PC-9 (cell line): ENCODE measurements at regions of chr16 and their contacts with region 1.

Region 1: DNA sequence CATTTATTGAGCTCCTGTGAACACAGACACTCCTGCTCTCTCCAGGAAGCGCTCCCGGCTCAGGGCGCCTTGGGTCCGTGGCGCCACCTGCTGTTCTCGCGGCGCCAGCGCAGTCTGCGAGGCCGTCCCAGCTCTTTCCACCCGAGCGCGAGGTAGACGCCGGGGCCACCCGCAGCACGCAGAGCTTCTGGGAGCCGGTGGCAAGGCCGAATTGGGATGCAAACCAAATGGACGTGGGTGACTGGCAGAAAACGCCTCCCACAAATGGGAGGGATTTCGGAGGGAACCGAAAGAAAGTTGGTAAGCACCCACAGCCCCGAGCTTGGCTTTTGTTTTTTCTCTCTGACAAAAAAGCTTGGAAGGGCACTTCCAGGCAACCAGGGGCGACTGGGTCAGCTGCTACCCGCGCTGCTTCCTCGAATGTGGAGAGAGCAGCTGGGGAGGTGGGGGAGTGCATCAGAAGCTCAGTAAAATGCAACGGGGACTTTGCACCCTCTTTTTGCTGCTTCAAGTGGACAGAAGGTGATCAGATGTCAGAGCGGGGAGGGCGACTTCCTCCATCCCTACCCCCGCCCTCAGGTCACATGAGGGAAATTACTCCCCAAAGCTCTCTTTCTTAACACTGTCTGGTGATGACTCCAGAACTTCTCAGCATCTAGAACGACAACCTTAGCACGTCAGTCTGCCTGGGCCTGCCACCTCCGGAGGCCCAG is 13.5 kb upstream of the N4BP1 start:
- DNase-seq: peak; percentile 64 to 92
- H3K4me3 ChIP-seq: peak overlapping the region; percentile 56
- H3K27ac ChIP-seq: no peak overlapping the region
- H3K4me1 ChIP-seq: 0 out of 2 replicates have a peak, but pooled peaks cover 8% of the 10 kb centered on the region
- H3K27me3 ChIP-seq: no peaks in the 10 kb centered on the region
- CTCF ChIP-seq: peak; percentile 95

Region 2: DNA sequence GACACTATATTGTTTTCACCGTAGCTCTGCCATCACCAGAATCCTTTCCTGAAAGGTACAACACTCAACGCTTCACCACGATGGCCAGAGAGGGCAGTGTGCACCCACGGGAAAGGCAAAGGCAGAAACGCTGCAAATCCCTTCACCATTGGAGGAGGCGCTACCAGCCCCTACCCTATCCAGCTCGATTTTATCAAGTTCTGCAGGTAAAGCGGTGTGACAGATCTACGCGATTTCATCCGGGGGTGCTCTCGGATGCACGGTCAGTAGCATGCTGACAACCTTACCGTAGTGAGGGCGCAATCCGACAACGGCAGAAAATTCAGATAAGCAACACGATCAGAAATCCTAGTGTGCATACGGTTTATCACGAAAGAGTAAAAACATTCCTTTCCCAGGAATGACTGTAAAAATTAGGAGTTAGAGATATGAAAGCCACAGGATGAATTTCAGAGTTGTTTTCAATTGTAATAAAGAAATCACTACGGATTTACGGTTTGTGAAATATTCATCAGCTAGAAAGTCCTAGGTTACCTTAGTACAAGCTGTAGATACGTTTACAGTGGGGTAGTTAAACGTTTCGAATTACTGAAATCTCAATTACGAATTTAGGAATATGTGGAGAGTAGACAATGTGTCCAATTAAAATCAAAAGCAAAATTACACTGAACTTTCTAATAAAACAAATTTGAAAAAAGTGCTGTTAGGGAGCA is 1481.5 kb before region 1 on chr16:
- CTCF ChIA-PET with region 1: interaction called, 3 read pairs
- POLR2A ChIA-PET with region 1: interaction called, 4 read pairs
- intact Hi-C with region 1: loop called (anchors 2 kb)
- DNase-seq: peak; percentile 83 to 86
- H3K4me3 ChIP-seq: peak overlapping the region; percentile 75
- H3K27ac ChIP-seq: peak overlapping the region; percentile 17; the same call in 1 of the 2 replicates
- H3K4me1 ChIP-seq: peaks cover 25% of the 10 kb centered on the region
- H3K27me3 ChIP-seq: no peaks in the 10 kb centered on the region
- CTCF ChIP-seq: peak; percentile 90

Region 3: DNA sequence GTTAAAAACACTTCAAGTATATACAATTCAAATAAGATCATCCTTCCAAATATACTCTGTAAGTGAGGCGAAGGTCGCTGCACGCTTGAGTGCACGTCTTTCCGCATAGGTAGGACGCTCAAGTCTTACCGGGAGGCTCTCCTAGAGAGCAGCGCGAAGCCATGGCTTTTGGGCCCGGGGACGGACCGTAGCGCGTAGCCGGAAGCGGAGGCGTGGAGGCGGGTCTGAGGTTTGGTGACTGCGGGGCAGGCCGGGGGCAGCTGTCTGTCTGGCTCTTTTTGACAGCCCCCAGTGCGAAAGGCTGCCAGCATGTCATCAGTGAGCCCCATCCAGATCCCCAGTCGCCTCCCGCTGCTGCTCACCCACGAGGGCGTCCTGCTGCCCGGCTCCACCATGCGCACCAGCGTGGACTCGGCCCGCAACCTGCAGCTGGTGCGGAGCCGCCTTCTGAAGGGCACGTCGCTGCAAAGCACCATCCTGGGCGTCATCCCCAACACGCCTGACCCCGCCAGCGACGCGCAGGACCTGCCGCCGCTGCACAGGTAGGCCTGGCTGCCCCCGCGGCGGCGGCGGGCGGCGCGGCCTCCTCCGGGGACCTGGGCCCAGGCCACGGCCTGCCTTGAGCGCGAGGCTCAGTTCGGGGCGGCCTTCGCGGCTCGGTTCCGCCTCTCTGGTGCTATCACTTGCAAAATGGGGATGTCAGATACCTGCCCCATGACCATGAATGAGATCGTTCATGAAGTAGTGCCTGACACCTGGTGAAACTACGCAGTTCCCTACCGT is 379.2 kb before region 1 on chr16 and contains the start of gene LONP2:
- CTCF ChIA-PET with region 1: no interaction called
- POLR2A ChIA-PET with region 1: no interaction called
- intact Hi-C with region 1: loop called (anchors 10 kb)
- DNase-seq: peak; percentile 82 to 90
- H3K4me3 ChIP-seq: peak within 1 kb of the TSS; percentile 74
- H3K27ac ChIP-seq: peak within 1 kb of the TSS; percentile 74
- H3K4me1 ChIP-seq: peaks cover 23% of the 10 kb centered on the region
- H3K27me3 ChIP-seq: no peaks in the 10 kb centered on the region
- CTCF ChIP-seq: no peak
- total RNA-seq, gene LONP2: 41.9 and 47.0 TPM in 2 replicates

Region 4: DNA sequence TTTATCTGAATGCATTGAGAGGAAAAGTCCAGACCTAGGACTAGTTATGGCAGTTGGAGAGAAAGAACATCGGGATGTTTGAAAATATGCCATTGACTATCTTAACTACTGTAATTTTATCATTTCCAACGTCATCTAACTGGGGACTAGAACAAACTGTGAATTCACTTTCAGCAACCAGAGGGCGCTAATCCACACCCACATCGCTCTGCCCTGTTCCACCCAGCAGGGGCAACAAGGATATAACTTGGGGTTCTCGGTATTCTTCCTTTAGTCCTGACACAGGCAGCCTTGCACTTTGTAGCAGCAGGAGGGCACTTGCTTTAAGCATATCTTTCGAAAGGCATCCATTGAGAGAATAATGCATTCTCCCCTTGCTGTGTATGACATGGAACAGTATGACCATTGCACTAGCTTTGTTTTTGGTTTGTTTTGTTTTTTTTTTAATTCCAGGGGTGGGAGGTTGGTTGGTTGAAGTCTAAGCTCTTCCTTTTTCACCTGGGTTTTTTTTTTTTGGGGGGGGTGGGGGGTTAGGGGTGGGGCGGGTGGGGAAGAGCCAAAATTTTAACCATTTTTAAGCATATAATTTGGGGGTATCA is 269.8 kb before region 1 on chr16:
- CTCF ChIA-PET with region 1: interaction called, 24 read pairs
- POLR2A ChIA-PET with region 1: interaction called, 22 read pairs
- intact Hi-C with region 1: loop called (anchors 1 kb)
- DNase-seq: peak; percentile 58 to 68
- H3K4me3 ChIP-seq: no peak overlapping the region
- H3K27ac ChIP-seq: no peak overlapping the region
- H3K4me1 ChIP-seq: no peaks in the 10 kb centered on the region
- H3K27me3 ChIP-seq: no peaks in the 10 kb centered on the region
- CTCF ChIP-seq: peak; percentile 90

Region 5: DNA sequence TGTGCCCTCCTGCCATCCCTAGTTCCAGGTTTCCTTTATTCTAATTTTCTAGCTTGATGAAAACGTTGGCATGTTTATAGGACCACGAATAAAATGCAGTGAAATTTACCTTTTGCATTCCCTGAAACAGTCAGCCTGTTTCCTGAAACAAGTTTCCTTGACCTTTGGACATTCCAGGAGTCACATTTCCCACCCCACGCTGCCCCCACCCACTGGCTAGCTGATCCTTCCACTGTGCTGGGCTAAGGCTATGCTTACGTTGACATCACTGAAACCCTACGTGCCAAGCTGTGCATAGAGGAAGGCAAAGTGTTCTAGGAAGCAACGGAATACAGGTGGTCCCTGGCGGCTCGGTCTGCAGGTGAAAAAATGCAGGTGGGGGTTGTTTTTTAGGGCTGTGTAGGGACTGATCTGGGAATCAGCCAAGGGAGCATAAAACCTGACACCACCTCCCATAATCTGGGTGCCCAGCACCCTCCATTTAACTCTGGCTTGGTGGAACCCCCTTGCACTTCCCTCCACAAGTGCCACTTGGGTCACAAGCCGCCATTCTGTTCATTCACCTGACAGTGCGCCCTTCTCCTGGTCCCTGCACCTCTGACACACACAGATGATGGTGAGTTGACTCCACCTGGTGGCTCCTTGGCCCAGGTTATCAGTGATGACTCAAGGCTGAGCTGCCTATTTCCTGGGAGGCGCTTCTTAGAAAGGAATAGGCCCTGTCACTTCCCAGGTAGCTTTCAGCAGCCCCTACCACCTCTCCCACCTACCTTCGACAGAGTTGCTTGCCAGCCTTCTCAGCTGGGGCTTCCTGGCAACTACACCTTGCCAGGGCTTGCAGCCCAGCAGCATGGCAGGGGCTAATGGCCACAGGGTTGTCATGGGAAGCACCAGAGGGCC is 97.2 kb before region 1 on chr16:
- CTCF ChIA-PET with region 1: interaction called, 14 read pairs
- POLR2A ChIA-PET with region 1: no interaction called
- intact Hi-C with region 1: loop called (anchors 1 kb)
- DNase-seq: peak; percentile 71 to 74
- H3K4me3 ChIP-seq: no peak overlapping the region
- H3K27ac ChIP-seq: no peak overlapping the region
- H3K4me1 ChIP-seq: peaks cover 22% of the 10 kb centered on the region
- H3K27me3 ChIP-seq: no peaks in the 10 kb centered on the region
- CTCF ChIP-seq: peak; percentile 77

Region 6: DNA sequence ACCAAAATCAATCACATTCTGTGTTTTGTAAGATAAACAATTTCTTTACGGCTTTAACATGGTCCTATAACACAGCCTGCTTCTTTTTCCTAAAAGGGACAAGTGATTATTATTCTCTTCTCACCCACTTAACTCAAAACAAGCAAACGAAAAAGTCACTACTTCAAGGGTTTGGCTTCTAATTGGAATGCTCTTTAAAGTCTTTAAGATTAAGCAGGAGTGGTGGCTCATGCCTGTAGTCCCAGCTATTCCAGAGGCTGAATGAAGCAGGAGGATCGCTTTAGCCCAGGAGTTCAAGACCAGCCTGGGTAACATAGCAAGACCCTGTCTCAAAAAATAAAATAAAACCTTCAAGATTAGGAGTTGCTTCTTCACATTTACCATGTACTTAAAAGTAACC is 1335.0 kb after region 1 on chr16:
- CTCF ChIA-PET with region 1: interaction called, 11 read pairs
- POLR2A ChIA-PET with region 1: no interaction called
- intact Hi-C with region 1: no loop called
- DNase-seq: no peak
- H3K4me3 ChIP-seq: no peak overlapping the region
- H3K27ac ChIP-seq: no peak overlapping the region
- H3K4me1 ChIP-seq: no peaks in the 10 kb centered on the region
- H3K27me3 ChIP-seq: peaks cover 80% of the 10 kb centered on the region
- CTCF ChIP-seq: no peak